CD4-positive, alpha-beta T cell (primary cell): ENCODE measurements at regions of chr1 and their contacts with region 1.

Region 1: DNA sequence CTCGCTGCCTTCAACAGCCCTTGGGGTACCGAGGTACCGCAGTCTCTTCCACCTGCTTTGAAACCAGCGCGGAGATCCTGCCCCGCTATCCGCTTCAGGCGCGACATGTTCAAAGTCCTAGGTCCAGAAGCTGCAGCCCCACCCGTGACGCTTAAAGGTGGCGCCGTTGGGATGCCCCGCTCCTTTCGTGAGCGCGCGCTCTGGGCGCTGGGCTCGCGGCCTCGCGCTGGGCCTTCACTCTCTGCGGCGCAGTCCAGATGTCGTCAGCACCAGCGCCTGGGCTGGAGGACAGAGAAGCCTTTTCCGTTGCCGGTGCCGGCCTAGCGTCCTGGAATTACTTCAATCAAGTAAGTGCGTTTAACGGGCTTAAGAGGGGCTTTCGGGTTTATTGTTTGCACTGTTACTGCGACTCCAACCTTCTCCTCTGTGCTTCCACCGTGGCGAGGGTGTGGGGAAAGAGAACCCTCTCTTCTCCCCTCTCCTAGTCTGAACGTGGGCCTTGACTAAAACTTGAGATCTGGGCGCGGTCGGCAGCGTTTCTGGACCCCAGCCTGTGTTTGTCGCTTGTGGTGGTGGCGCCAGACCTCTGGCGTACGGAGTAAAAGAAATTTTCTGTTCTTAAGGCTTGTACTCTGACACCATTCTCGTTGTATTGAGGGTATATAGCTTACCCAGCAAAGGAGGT is at the start of gene LRRC40:
- DNase-seq: peak; percentile 88 to 98 (median 95)
- ATAC-seq: peak; percentile 90
- H3K4me3 ChIP-seq: peak within 1 kb of the TSS; percentile 81
- H3K4me3 Mint-ChIP-seq: peak within 1 kb of the TSS; percentile 99
- H3K27ac ChIP-seq: peak within 1 kb of the TSS; percentile 85 to 97
- H3K27ac Mint-ChIP-seq: peak within 1 kb of the TSS; percentile 99
- H3K4me1 ChIP-seq: peaks cover 38% of the 10 kb centered on the region
- H3K4me1 Mint-ChIP-seq: peaks cover 84% of the 10 kb centered on the region
- H3K27me3 ChIP-seq: no peaks in the 10 kb centered on the region
- H3K27me3 Mint-ChIP-seq: no peaks in the 10 kb centered on the region
- CTCF ChIP-seq: no peak
- total RNA-seq, gene LRRC40: 12.4 to 13.3 TPM

Region 2: GRCh38 chr1:70264839-70265238 is 59.3 kb after region 1 on chr1:
- CTCF ChIA-PET with region 1: no interaction called
- POLR2A ChIA-PET with region 1: no interaction called
- intact Hi-C with region 1: no loop called
- DNase-seq: no peak
- ATAC-seq: no peak
- H3K4me3 ChIP-seq: no peak overlapping the region
- H3K4me3 Mint-ChIP-seq: no peak overlapping the region
- H3K27ac ChIP-seq: no peak overlapping the region
- H3K27ac Mint-ChIP-seq: peak overlapping the region; percentile 6
- H3K4me1 ChIP-seq: no peaks in the 10 kb centered on the region
- H3K4me1 Mint-ChIP-seq: no peaks in the 10 kb centered on the region
- H3K27me3 ChIP-seq: no peaks in the 10 kb centered on the region
- H3K27me3 Mint-ChIP-seq: no peaks in the 10 kb centered on the region
- CTCF ChIP-seq: no peak

Region 3: DNA sequence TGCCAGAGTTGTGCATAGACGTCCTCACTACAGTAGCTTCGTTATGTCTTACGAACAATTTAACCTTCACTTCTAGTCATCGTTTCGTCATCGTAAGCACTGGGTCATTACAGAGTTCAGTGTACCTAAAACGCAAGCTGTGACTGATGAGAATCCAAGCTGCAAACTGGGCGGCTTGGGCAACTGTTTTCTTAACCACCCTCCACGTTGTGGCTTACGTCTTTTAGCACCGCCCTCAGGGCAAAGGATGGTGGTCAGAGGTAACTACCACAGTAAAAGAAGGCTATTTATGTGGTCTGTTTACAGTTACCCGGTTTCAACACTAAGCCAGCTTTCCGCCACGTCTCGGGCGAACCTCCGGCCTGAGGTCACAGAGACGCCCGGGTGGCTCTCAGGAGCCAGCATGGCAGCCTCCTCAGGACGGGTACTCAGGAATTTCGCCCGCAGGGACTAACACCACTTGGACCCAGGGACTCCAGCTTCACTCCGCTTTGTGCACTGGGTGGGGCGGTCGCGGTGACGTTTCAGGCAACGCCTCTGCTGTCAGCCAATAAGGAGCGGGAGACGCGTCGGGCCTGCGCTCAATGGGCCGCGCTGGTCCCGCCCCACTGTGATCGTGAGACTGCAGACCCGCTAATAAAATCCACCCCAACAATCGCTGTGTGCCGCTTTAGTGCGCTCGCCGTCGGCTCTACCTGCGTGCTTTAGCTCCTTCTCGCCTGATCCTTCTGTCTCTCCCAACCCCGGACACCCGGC is 205.2 kb after region 1 on chr1 and contains the start of gene CTH:
- CTCF ChIA-PET with region 1: no interaction called
- POLR2A ChIA-PET with region 1: interaction called, 17 read pairs
- intact Hi-C with region 1: loop called in 1 of 2 experiments (anchors 2 kb)
- DNase-seq: peak; percentile 76 to 97 (median 89)
- ATAC-seq: peak; percentile 91
- H3K4me3 ChIP-seq: peak within 1 kb of the TSS; percentile 94
- H3K4me3 Mint-ChIP-seq: peak within 1 kb of the TSS; percentile 96
- H3K27ac ChIP-seq: peak within 1 kb of the TSS; percentile 82 to 96
- H3K27ac Mint-ChIP-seq: peak within 1 kb of the TSS; percentile 97
- H3K4me1 ChIP-seq: peaks cover 10% of the 10 kb centered on the region
- H3K4me1 Mint-ChIP-seq: peaks cover 31% of the 10 kb centered on the region
- H3K27me3 ChIP-seq: no peaks in the 10 kb centered on the region
- H3K27me3 Mint-ChIP-seq: peaks cover 6% of the 10 kb centered on the region
- CTCF ChIP-seq: no peak
- total RNA-seq, gene CTH: 5.6 to 7.9 TPM